Mammary epithelial cell (primary cell): ENCODE measurements at regions of chr12 and their contacts with region 1.

Region 1: GRCh38 chr12:18139989-18140596 is 50.1 kb upstream of the RERGL start:
- DNase-seq: peak; percentile 9
- H3K4me3 ChIP-seq: no peak overlapping the region
- H3K27ac ChIP-seq: no peak overlapping the region
- H3K4me1 ChIP-seq: peaks cover 12% of the 10 kb centered on the region
- H3K27me3 ChIP-seq: no peaks in the 10 kb centered on the region
- CTCF ChIP-seq: peak; percentile 55 to 59

Region 2: DNA sequence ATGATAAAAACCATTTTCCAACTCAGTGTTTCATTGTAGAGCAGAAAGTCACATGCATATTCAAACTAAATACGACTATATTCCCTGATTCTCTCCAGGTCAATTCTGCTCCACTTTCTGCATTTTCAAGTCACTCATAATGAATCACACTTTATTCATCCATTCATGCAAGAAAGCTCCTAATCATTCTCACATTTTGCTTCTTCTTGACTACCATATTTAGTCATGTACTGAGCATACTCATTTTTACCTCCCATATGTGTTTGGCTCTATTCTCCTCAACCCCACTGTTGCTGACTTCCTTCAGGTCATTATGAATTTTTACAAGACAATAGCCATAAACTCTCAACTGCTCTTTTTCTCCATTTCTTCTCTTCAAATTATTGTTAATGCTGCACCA is 77.9 kb after region 1 on chr12:
- CTCF ChIA-PET with region 1: no interaction called
- dilution Hi-C with region 1: no loop called
- in situ Hi-C with region 1: loop called (anchors 10 kb)
- intact Hi-C with region 1: no loop called
- DNase-seq: peak; percentile 20
- H3K4me3 ChIP-seq: no peak overlapping the region
- H3K27ac ChIP-seq: no peak overlapping the region
- H3K4me1 ChIP-seq: no peaks in the 10 kb centered on the region
- H3K27me3 ChIP-seq: no peaks in the 10 kb centered on the region
- CTCF ChIP-seq: no peak

Region 3: GRCh38 chr12:18224745-18225144 is 84.7 kb after region 1 on chr12:
- CTCF ChIA-PET with region 1: interaction called, 5 read pairs
- dilution Hi-C with region 1: no loop called
- in situ Hi-C with region 1: loop called (anchors 10 kb)
- intact Hi-C with region 1: loop called (anchors 1 kb)
- DNase-seq: peak; percentile 34
- H3K4me3 ChIP-seq: no peak overlapping the region
- H3K27ac ChIP-seq: no peak overlapping the region
- H3K4me1 ChIP-seq: no peaks in the 10 kb centered on the region
- H3K27me3 ChIP-seq: no peaks in the 10 kb centered on the region
- CTCF ChIP-seq: peak; percentile 52 to 63

Region 4: DNA sequence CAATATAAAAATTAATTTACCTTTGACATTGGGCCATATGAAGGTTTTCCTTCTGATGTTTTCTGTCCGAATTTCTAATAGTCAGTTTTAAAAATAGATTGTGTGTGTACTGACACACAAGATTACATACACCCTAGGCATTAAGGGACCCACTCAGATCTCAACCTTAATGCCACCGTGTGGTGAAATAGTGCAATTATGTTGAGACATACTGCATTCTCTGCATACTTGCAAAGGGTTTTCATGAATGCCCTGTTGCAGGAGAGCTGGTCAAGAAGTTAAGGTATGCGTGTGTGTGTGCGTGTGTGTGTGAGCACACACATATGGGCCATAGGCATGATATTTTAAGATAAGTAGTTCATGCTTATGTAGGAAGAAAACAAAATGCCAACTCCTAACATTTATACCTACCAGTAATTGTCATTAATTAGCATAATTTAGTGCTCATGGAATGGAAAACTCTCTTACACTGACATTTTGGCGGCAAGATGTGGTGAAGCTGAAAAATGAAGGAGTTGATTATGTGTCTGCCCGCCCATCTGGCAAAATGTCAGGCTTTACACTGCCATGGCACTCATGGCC is 180.0 kb after region 1 on chr12:
- CTCF ChIA-PET with region 1: no interaction called
- dilution Hi-C with region 1: no loop called
- in situ Hi-C with region 1: no loop called
- intact Hi-C with region 1: loop called (anchors 1 kb)
- DNase-seq: peak; percentile 78
- H3K4me3 ChIP-seq: no peak overlapping the region
- H3K27ac ChIP-seq: peak overlapping the region; percentile 11
- H3K4me1 ChIP-seq: peaks cover 8% of the 10 kb centered on the region
- H3K27me3 ChIP-seq: no peaks in the 10 kb centered on the region
- CTCF ChIP-seq: peak; percentile 63 to 74

Region 5: DNA sequence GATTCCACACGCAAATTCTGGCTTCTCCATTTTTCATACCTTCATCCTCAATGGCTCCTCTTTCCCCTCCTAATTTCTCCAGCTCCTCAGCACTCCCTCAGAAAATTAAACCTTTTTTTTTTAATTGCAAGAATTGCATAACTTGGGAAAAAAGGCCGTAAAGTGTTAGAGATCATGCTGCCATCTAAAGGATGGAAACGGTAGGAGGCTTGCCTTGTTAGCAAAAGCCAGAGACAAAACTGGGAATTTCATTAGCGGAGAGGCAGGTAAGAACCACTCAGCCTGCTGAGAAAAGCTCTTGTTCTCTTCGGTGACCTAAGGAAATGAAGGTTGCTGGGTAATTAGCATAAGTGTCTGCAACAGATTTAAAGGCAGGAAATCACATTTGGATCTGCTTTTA is 1503.5 kb after region 1 on chr12:
- CTCF ChIA-PET with region 1: no interaction called
- dilution Hi-C with region 1: no loop called
- in situ Hi-C with region 1: no loop called
- intact Hi-C with region 1: loop called (anchors 5 kb)
- DNase-seq: peak; percentile 48
- H3K4me3 ChIP-seq: no peak overlapping the region
- H3K27ac ChIP-seq: no peak overlapping the region
- H3K4me1 ChIP-seq: no peaks in the 10 kb centered on the region
- H3K27me3 ChIP-seq: no peaks in the 10 kb centered on the region
- CTCF ChIP-seq: peak; percentile 57 to 73